Activated CD4-positive, alpha-beta memory T cell treated with anti-CD3 and anti-CD28 coated beads for 36 hours (primary cell): ENCODE measurements at regions of chr10 and their contacts with region 1.

Region 1: GRCh38 chr10:72337020-72337629 is 17.6 kb downstream of the DNAJB12 start:
- DNase-seq: peak; percentile 79
- H3K4me3 Mint-ChIP-seq: no peak overlapping the region
- H3K27ac Mint-ChIP-seq: peak overlapping the region; percentile 99
- H3K4me1 Mint-ChIP-seq: peaks cover 61% of the 10 kb centered on the region
- H3K27me3 Mint-ChIP-seq: no peaks in the 10 kb centered on the region

Region 2: GRCh38 chr10:72133517-72133916 is 203.6 kb before region 1 on chr10:
- CTCF ChIA-PET with region 1: interaction called, 58 read pairs
- POLR2A ChIA-PET with region 1: interaction called, 3 read pairs
- intact Hi-C with region 1: loop called (anchors 2 kb)
- DNase-seq: no peak
- H3K4me3 Mint-ChIP-seq: no peak overlapping the region
- H3K27ac Mint-ChIP-seq: no peak overlapping the region
- H3K4me1 Mint-ChIP-seq: peaks cover 26% of the 10 kb centered on the region
- H3K27me3 Mint-ChIP-seq: no peaks in the 10 kb centered on the region

Region 3: DNA sequence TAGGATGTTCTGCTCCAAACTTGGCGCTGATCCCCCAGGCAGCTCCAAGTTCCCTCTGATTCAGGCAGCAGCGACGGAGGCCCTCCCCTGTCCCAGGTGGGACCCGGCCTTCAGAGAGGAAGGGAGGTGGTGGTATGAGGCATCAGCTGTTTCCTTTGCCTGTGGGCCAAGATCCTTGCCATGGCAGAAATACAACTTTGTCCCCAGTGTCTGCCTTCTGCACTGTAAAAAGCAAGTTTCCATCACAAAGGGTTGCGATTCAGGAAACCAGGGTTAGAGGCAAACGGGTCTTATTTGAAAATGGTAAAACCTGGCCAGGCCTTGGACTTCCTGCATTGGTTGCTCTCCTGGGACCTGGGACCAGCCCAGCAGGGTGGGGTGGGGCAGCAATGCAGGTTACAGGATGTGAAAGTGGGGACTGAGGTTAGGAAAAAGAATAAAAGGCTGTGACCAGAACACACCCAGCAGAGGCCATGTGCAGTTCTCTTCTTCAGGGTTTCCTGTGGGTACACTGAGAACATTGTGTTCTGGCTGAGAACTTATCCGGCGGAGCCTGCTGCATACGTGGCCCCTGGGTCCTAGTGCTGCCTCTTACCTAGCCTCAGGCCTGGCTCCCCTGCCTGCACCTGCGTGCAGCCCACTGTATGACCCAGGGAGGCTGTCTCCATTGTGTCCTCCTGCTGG is 88.5 kb before region 1 on chr10:
- CTCF ChIA-PET with region 1: interaction called, 21 read pairs
- POLR2A ChIA-PET with region 1: no interaction called
- intact Hi-C with region 1: loop called (anchors 2 kb)
- DNase-seq: peak; percentile 84
- H3K4me3 Mint-ChIP-seq: peak overlapping the region; percentile 83
- H3K27ac Mint-ChIP-seq: peak overlapping the region; percentile 98
- H3K4me1 Mint-ChIP-seq: peaks cover 74% of the 10 kb centered on the region
- H3K27me3 Mint-ChIP-seq: no peaks in the 10 kb centered on the region

Region 4: DNA sequence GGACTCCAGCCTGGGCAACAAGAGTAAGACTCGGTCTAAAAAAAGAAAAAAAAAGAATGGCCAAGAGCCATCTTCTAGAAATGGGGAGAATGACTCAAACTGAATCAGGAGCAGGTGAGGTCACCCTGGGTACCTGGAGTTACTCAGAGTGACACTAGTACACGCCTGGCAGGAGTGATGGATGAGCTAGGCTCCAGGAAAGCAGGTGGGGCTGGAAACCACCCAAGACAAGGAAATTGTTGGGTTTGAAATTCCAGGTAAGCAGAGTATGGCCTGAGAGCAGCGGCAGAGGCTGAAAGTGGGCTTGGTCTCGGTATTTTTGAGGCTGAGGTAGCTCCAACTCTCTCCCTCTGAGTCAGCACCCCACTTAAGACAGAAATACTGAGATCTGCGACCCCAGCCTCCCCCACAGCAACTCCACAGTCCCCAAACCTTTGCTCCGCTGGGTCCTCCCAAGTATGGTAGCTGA is 44.9 kb before region 1 on chr10:
- CTCF ChIA-PET with region 1: interaction called, 21 read pairs
- POLR2A ChIA-PET with region 1: interaction called, 80 read pairs
- intact Hi-C with region 1: loop called (anchors 1 kb)
- DNase-seq: peak; percentile 89
- H3K4me3 Mint-ChIP-seq: no peak overlapping the region
- H3K27ac Mint-ChIP-seq: peak overlapping the region; percentile 100
- H3K4me1 Mint-ChIP-seq: peaks cover 59% of the 10 kb centered on the region
- H3K27me3 Mint-ChIP-seq: peaks cover 3% of the 10 kb centered on the region

Region 5: GRCh38 chr10:72348282-72348681 is 11.2 kb after region 1 on chr10:
- CTCF ChIA-PET with region 1: interaction called, 14 read pairs
- POLR2A ChIA-PET with region 1: interaction called, 4 read pairs
- intact Hi-C with region 1: no loop called
- DNase-seq: no peak
- H3K4me3 Mint-ChIP-seq: no peak overlapping the region
- H3K27ac Mint-ChIP-seq: no peak overlapping the region
- H3K4me1 Mint-ChIP-seq: peaks cover 38% of the 10 kb centered on the region
- H3K27me3 Mint-ChIP-seq: no peaks in the 10 kb centered on the region

Region 6: GRCh38 chr10:72364239-72364777 is 27.2 kb after region 1 on chr10:
- CTCF ChIA-PET with region 1: no interaction called
- POLR2A ChIA-PET with region 1: no interaction called
- intact Hi-C with region 1: no loop called
- DNase-seq: peak; percentile 91
- H3K4me3 Mint-ChIP-seq: no peak overlapping the region
- H3K27ac Mint-ChIP-seq: no peak overlapping the region
- H3K4me1 Mint-ChIP-seq: peaks cover 14% of the 10 kb centered on the region
- H3K27me3 Mint-ChIP-seq: no peaks in the 10 kb centered on the region

Region 7: GRCh38 chr10:72740528-72740927 is 403.4 kb after region 1 on chr10:
- CTCF ChIA-PET with region 1: no interaction called
- POLR2A ChIA-PET with region 1: no interaction called
- intact Hi-C with region 1: no loop called
- DNase-seq: no peak
- H3K4me3 Mint-ChIP-seq: no peak overlapping the region
- H3K27ac Mint-ChIP-seq: no peak overlapping the region
- H3K4me1 Mint-ChIP-seq: peaks cover 5% of the 10 kb centered on the region
- H3K27me3 Mint-ChIP-seq: no peaks in the 10 kb centered on the region